ENCODE measurements at regions of chrX and their contacts with region 1.

Region 1: DNA sequence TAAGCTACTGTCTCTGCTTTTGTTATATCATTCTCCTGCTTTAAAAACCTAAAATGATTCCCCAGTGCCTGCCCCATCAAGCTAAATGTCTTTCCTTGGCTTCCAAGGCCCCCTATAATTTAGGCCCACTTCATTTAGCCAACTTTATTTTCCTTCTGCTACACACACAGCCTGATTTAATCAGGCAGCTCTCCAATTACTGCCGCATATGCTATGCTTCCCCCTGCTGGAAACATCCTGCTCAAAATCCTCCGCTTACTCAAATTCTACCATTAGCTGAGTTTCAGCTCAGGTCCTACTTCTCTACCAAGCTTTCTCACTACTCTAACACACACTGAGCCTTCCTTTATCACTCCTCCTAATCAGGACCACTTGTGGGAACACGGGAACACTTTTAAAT is 17.0 kb downstream of the LAMP2 start:
- DNase-seq: peak; percentile 17
- H3K4me3 ChIP-seq: no peak overlapping the region
- H3K27ac ChIP-seq: no peak overlapping the region
- H3K4me1 ChIP-seq: peaks cover 12% of the 10 kb centered on the region
- H3K27me3 ChIP-seq: no peaks in the 10 kb centered on the region
- CTCF ChIP-seq: peak; percentile 11 to 15
- POLR2A ChIP-seq: no peak

Region 2: GRCh38 chrX:120380699-120381098 is 71.4 kb before region 1 on chrX:
- CTCF ChIA-PET with region 1: interaction called, 16 read pairs
- POLR2A ChIA-PET with region 1: no interaction called
- dilution Hi-C with region 1: no loop called
- intact Hi-C with region 1: loop called (anchors 5 kb)
- DNase-seq: peak; percentile 2
- H3K4me3 ChIP-seq: no peak overlapping the region
- H3K27ac ChIP-seq: no peak overlapping the region
- H3K4me1 ChIP-seq: no peaks in the 10 kb centered on the region
- H3K27me3 ChIP-seq: peaks cover 3 to 5% of the 10 kb centered on the region in 2 experiments
- CTCF ChIP-seq: peak; percentile 15 to 23
- POLR2A ChIP-seq: no peak

Region 3: GRCh38 chrX:120468825-120469525 is 16.8 kb after region 1 on chrX and contains the start of gene LAMP2:
- CTCF ChIA-PET with region 1: interaction called, 4 read pairs
- POLR2A ChIA-PET with region 1: no interaction called
- dilution Hi-C with region 1: no loop called
- intact Hi-C with region 1: loop called (anchors 2 kb)
- DNase-seq: peak; percentile 86
- H3K4me3 ChIP-seq: peak within 1 kb of the TSS; percentile 43 to 95 (median 86)
- H3K27ac ChIP-seq: peak within 1 kb of the TSS; percentile 87
- H3K4me1 ChIP-seq: peaks cover 10% of the 10 kb centered on the region
- H3K27me3 ChIP-seq: no peaks in the 10 kb centered on the region
- CTCF ChIP-seq: no peak
- POLR2A ChIP-seq: peak; percentile 82
- total RNA-seq, gene LAMP2: 128 and 135 TPM in 2 replicates

Region 4: GRCh38 chrX:120736989-120737388 is 284.9 kb after region 1 on chrX:
- CTCF ChIA-PET with region 1: no interaction called
- POLR2A ChIA-PET with region 1: no interaction called
- dilution Hi-C with region 1: no loop called
- intact Hi-C with region 1: no loop called
- DNase-seq: peak; percentile 80
- H3K4me3 ChIP-seq: no peak overlapping the region
- H3K27ac ChIP-seq: peak overlapping the region; percentile 49
- H3K4me1 ChIP-seq: peaks cover 28% of the 10 kb centered on the region
- H3K27me3 ChIP-seq: no peaks in the 10 kb centered on the region
- CTCF ChIP-seq: no peak
- POLR2A ChIP-seq: peak; percentile 26

Measured in endothelial cell of umbilical vein (primary cell).